WTC11 (cell line): ENCODE measurements at regions of chr20 and their contacts with region 1.

Region 1: GRCh38 chr20:46349035-46349741 is 40.9 kb upstream of the CDH22 start:
- DNase-seq: peak; percentile 81
- ATAC-seq: peak; percentile 38
- H3K4me3 Mint-ChIP-seq: peak overlapping the region; percentile 38; the same call in 1 of the 2 replicates
- H3K27ac Mint-ChIP-seq: peak overlapping the region; percentile 41
- H3K4me1 Mint-ChIP-seq: peaks cover 36% of the 10 kb centered on the region
- H3K27me3 Mint-ChIP-seq: peaks cover 7% of the 10 kb centered on the region
- CTCF ChIP-seq: peak; percentile 54

Region 2: GRCh38 chr20:46151936-46152335 is 197.3 kb before region 1 on chr20:
- CTCF ChIA-PET with region 1: interaction called, 12 read pairs
- POLR2A ChIA-PET with region 1: interaction called, 3 read pairs
- DNase-seq: peak; percentile 77
- ATAC-seq: peak; percentile 87
- H3K4me3 Mint-ChIP-seq: no peak overlapping the region
- H3K27ac Mint-ChIP-seq: no peak overlapping the region
- H3K4me1 Mint-ChIP-seq: peaks cover 3% of the 10 kb centered on the region
- H3K27me3 Mint-ChIP-seq: no peaks in the 10 kb centered on the region
- CTCF ChIP-seq: peak; percentile 51

Region 3: DNA sequence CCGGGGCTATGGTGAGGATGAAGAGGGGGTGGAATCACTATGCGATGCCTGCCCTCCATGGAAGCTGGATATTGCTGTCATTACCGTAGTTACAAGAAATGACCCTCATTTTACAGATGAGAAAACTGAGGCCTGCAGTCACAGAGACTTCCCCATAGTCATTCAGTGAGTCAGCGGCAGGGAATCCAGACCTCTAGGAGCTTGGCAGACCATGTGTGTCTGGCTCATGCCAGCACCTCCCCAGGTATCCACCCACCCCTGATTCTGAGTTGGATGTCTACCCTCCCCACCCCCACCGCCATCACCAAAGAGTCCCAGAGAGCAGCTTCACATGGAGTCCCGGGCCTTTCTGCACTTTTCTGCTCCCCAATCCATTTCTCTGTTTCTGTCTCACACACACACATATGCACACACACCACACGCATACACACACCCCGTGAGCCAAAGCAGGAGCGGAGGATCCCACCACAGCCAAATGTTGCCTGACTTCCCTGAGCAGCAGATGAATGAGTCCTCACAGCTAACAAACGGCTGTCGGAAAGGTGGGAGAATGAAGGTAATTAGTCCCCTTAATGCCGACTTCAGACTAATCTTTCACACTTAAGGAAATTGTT is 65.7 kb before region 1 on chr20:
- CTCF ChIA-PET with region 1: interaction called, 16 read pairs
- POLR2A ChIA-PET with region 1: no interaction called
- DNase-seq: no peak
- ATAC-seq: no peak
- H3K4me3 Mint-ChIP-seq: no peak overlapping the region
- H3K27ac Mint-ChIP-seq: no peak overlapping the region
- H3K4me1 Mint-ChIP-seq: peaks cover 13% of the 10 kb centered on the region
- H3K27me3 Mint-ChIP-seq: no peaks in the 10 kb centered on the region; the same call in 1 of the 2 replicates
- CTCF ChIP-seq: no peak

Region 4: GRCh38 chr20:46324960-46325703 is 24.1 kb before region 1 on chr20:
- CTCF ChIA-PET with region 1: interaction called, 43 read pairs
- POLR2A ChIA-PET with region 1: no interaction called
- DNase-seq: peak; percentile 62
- ATAC-seq: peak; percentile 87
- H3K4me3 Mint-ChIP-seq: no peak overlapping the region
- H3K27ac Mint-ChIP-seq: no peak overlapping the region
- H3K4me1 Mint-ChIP-seq: peaks cover 12% of the 10 kb centered on the region
- H3K27me3 Mint-ChIP-seq: no peaks in the 10 kb centered on the region
- CTCF ChIP-seq: no peak

Region 5: DNA sequence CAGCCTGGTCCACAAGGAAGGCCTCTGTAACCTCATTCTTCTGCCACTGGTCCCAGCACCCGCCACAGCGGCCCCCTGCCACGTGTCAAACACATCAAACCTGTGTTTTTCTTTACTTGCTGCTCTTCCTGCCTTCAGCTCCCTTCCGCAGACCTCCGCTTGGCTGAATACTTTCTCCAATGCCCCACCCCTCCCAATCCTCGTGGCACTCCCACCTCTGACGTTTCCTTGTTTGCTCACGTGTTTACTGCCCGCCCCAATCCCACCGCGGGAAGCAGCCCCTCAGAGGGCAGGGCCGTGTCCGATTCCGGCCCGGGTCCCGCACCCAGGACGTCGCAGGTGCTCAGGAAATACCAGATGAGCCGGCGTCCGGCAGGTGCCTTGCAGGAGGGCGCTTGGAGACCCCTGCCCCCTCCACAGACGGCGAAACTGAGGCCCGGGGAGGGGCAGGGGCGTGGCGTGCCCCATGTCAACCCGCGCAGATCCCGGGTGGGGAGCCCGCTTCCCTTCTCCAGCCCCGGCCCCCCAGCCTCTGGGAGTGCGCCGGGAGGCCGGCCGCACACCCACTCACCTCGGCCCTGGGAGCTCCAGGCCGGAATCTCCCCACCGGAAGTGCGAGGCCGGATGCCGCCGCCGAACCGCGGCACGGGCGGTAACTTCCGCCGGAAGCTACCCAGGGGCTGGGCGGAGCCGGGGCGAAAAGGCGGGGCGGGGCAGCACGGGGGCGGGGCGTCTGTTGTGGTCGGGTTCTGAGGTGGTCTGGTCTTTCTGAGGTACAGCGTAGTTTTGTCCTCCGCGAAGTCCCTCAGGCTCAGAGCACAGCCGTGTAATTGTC is 14.8 kb after region 1 on chr20:
- CTCF ChIA-PET with region 1: interaction called, 13 read pairs
- POLR2A ChIA-PET with region 1: interaction called, 6 read pairs
- DNase-seq: peak; percentile 87
- ATAC-seq: peak; percentile 90
- H3K4me3 Mint-ChIP-seq: peak overlapping the region; percentile 91
- H3K27ac Mint-ChIP-seq: peak overlapping the region; percentile 97
- H3K4me1 Mint-ChIP-seq: peaks cover 13% of the 10 kb centered on the region
- H3K27me3 Mint-ChIP-seq: no peaks in the 10 kb centered on the region
- CTCF ChIP-seq: no peak

Region 6: DNA sequence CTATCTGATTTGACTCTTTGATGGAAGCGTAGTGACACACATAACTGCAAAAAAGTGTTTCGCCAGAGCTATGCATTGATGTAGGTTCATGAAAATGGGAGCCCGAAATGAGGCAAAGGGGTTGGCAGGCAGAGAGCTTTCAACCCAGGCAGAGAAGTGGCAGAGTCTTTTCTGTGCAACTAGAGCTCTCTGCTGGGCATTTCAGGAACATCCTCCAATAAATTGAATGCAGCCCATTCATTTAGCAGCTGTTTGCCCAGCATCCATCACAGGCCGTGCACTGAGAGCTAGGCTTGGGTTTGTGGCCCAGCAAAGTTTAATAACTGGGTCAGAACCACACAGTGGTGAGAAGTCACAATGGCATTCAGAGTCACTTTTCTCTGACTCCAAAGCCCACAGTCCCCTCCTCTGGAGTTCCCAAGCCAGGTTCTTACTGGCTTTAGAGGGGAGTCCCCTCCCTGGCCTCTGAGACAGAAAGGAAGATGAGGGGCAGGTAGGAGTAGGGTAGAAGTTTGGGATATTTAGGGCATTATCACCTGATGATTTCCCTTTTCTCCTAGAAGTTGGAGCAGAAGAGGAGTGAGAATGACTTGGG is 89.1 kb after region 1 on chr20:
- CTCF ChIA-PET with region 1: interaction called, 10 read pairs
- POLR2A ChIA-PET with region 1: no interaction called
- DNase-seq: no peak
- ATAC-seq: peak; percentile 70
- H3K4me3 Mint-ChIP-seq: no peak overlapping the region
- H3K27ac Mint-ChIP-seq: no peak overlapping the region
- H3K4me1 Mint-ChIP-seq: no peaks in the 10 kb centered on the region
- H3K27me3 Mint-ChIP-seq: peaks cover 2% of the 10 kb centered on the region
- CTCF ChIP-seq: no peak